GM12878 (cell line): ENCODE measurements at regions of chr12 and their contacts with region 1.

Region 1: GRCh38 chr12:104215638-104216297 is at the start of gene TXNRD1:
- DNase-seq: peak; percentile 19
- ATAC-seq: peak; percentile 99
- H3K4me3 ChIP-seq: peak within 1 kb of the TSS; percentile 53; the same call in 1 of the 2 replicates
- H3K27ac ChIP-seq: no peak within 1 kb of the TSS
- H3K4me1 ChIP-seq: no peaks in the 10 kb centered on the region
- H3K27me3 ChIP-seq: no peaks in the 10 kb centered on the region
- CTCF ChIP-seq: peak; percentile 81 to 94 (median 83)
- EP300 ChIP-seq: no peak
- POLR2A ChIP-seq: peak; percentile 81
- RAD21 ChIP-seq: peak; percentile 85
- polyA plus RNA-seq, gene TXNRD1: 52.6 to 56.7 TPM

Region 2: DNA sequence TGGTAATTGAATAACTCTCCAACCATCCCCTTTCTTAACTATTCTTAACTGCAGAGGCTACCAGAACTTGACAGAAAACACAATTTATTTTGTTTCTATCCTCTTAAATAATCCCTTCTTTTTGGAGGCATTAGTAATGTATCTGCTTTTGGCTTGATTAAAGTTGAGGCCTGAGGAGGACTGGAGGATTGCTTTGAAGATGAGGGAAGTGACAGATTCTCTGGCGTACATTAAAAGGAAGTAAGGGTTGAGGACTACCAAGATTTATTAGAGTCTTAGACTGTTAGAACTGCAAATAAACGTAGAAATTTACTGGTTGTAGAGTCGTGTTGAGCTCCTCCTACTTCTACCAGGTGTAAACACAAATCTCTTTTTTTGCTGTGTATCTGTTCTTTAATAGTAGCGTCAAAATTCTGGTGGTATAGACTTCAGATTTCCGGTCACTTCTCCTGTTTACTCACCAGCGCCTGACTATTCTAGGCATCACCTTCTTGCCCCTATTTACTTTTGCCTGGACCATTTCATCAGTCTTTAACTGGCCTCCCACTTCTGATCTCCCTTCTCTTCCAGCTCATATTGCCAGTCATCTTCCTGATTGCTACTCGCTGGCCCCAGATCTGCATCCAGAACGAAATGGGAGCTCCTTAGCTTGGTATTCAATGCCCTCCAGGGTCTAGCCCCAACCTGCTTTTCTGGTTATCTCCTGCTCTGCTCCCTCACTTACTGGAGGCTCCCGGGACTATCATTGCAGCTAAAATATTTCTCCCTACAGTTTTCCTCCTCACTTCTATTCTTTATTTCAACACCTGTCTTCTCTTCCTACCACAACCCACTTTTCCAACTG is 79.3 kb after region 1 on chr12:
- CTCF ChIA-PET with region 1: interaction called, 3 read pairs
- POLR2A ChIA-PET with region 1: no interaction called
- RAD21 ChIA-PET with region 1: interaction called, 3 read pairs
- SMC1A ChIA-PET with region 1: interaction called, 5 read pairs
- in situ Hi-C with region 1: no loop called
- intact Hi-C with region 1: loop called (anchors 2 kb)
- DNase-seq: no peak
- ATAC-seq: no peak
- H3K4me3 ChIP-seq: no peak overlapping the region
- H3K27ac ChIP-seq: no peak overlapping the region
- H3K4me1 ChIP-seq: no peaks in the 10 kb centered on the region; the same call in 1 of the 2 replicates
- H3K27me3 ChIP-seq: no peaks in the 10 kb centered on the region
- CTCF ChIP-seq: no peak
- EP300 ChIP-seq: no peak
- POLR2A ChIP-seq: no peak
- RAD21 ChIP-seq: no peak

Region 3: GRCh38 chr12:104358347-104359003 is 142.7 kb after region 1 on chr12:
- CTCF ChIA-PET with region 1: interaction called, 9 read pairs
- POLR2A ChIA-PET with region 1: no interaction called
- RAD21 ChIA-PET with region 1: interaction called, 3 read pairs
- SMC1A ChIA-PET with region 1: interaction called, 6 read pairs
- in situ Hi-C with region 1: no loop called
- intact Hi-C with region 1: loop called (anchors 1 kb)
- DNase-seq: peak; percentile 44
- ATAC-seq: peak; percentile 96
- H3K4me3 ChIP-seq: no peak overlapping the region
- H3K27ac ChIP-seq: no peak overlapping the region
- H3K4me1 ChIP-seq: no peaks in the 10 kb centered on the region
- H3K27me3 ChIP-seq: no peaks in the 10 kb centered on the region
- CTCF ChIP-seq: peak; percentile 91 to 96 (median 92)
- EP300 ChIP-seq: no peak
- POLR2A ChIP-seq: no peak
- RAD21 ChIP-seq: peak; percentile 90